Right ventricle myocardium inferior (tissue), 1 donor: ENCODE measurements at regions of chr2 and their contacts with region 1.

Region 1: DNA sequence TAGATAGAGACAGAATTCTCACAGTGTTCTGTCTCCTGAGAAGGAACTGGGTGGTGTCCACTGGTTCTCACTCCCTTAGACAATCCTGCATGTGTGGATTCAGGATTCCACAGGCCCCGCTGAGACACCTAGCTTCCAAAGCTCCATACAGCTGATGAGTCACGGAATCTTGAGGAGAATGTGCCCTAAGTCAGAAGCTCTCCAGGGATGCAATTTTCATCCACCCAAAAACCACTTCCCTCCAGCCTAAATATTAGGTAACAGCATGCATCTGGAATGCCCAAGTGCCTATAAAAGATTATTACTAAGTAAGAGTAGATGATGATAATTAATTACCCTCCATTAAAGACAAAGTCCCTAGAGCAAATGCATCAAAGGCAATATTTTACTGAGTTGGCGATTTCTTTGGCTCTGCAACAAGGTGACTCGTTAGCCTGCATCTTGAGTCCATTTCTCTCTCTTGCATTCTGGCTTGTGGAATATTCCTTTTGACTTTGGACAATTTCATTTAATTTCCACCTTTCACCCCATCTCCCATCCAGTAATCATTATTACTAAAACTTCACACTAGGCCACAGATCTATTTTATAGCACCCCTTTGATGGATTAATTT is 475.1 kb downstream of the TNS1 start:
- DNase-seq: no peak
- ATAC-seq: no peak

Region 2: GRCh38 chr2:217430916-217431576 is 96.7 kb before region 1 on chr2:
- intact Hi-C with region 1: no loop called
- DNase-seq: no peak
- ATAC-seq: no peak

Region 3: GRCh38 chr2:217650716-217651360 is 123.1 kb after region 1 on chr2:
- intact Hi-C with region 1: loop called (anchors 5 kb)
- DNase-seq: no peak
- ATAC-seq: peak; percentile 72